ENCODE measurements at regions of chr13 and their contacts with region 1.

Region 1: GRCh38 chr13:99214232-99214631 is 13.6 kb downstream of the UBAC2 start:
- DNase-seq: no peak
- H3K4me3 Mint-ChIP-seq: peak overlapping the region; percentile 67
- H3K27ac Mint-ChIP-seq: peak overlapping the region; percentile 93
- H3K4me1 Mint-ChIP-seq: peaks cover 61% of the 10 kb centered on the region
- H3K27me3 Mint-ChIP-seq: no peaks in the 10 kb centered on the region

Region 2: GRCh38 chr13:99154064-99154463 is 60.2 kb before region 1 on chr13:
- intact Hi-C with region 1: no loop called
- DNase-seq: no peak
- H3K4me3 Mint-ChIP-seq: no peak overlapping the region
- H3K27ac Mint-ChIP-seq: no peak overlapping the region
- H3K4me1 Mint-ChIP-seq: peaks cover 11% of the 10 kb centered on the region
- H3K27me3 Mint-ChIP-seq: peaks cover 5% of the 10 kb centered on the region

Region 3: DNA sequence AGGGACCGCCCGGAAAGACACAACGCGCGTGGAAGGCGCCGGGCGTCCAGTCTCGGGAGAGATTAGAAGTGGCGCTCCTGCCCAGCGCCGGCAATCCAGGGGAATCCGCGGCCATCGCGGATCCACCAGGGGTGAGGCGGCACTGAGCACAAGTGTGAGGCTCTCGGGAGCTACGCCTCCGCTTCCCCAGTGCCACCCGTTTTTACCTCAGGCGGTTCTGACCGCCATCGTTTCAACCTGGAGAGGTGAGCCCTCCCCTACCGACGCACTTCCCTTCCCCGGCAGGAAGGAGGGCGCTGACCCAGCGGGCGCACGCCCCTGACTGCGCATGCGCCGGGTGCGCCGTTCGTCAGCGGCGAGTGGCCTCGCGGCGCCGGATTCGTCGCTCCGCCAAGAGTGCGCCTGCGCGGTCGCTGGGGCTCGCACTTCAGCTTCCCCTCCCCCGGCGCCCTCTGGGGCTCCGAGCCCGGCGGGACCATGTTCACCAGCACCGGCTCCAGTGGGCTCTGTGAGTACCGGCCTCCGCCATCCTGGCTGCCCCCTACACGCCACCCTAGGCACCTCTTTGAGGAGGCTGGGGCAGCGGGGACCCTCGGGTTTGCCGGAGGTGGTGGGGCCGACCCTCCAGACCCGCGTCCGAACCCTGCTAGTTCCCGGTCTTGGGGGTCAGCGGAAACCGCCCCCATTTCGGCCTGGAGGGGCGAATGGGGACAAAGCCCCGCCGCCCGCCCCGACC is 13.6 kb before region 1 on chr13 and contains the start of gene UBAC2:
- intact Hi-C with region 1: loop called (anchors 1 kb)
- DNase-seq: peak; percentile 96
- H3K4me3 Mint-ChIP-seq: peak within 1 kb of the TSS; percentile 97
- H3K27ac Mint-ChIP-seq: peak within 1 kb of the TSS; percentile 93
- H3K4me1 Mint-ChIP-seq: peaks cover 53% of the 10 kb centered on the region
- H3K27me3 Mint-ChIP-seq: no peaks in the 10 kb centered on the region
- total RNA-seq, gene UBAC2: 53.4 and 55.1 TPM in 2 replicates

Region 4: DNA sequence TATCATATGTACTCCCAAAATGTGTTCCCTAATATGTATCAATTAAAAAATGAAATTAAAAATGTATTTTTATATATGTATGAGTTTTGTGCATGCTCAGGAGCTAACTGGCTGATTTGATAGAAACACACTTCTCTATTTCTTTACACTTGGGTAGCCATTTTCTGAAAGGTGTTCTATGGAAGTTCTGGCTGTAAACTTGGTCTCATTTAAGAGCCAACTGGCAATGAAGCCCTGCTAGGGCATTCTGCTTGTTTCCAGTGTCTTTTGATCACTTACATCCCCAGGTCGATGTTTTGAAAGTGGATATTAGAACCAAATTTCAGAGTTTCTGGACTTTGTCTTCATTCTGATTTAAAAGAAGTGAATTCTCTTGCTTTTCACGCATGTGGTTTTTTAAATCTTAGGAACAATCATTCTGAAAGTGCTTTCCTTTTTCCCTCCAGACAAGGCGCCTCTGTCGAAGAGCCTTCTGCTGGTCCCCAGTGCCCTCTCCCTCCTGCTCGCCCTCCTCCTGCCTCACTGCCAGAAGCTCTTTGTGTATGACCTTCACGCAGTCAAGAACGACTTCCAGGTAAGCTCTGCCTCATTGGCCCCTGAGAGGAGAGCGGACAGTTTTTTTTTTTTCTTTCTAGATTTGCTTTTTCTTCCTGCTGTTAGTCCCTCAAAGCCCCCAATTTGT is 23.9 kb after region 1 on chr13:
- intact Hi-C with region 1: loop called (anchors 1 kb)
- DNase-seq: no peak
- H3K4me3 Mint-ChIP-seq: peak overlapping the region; percentile 73
- H3K27ac Mint-ChIP-seq: peak overlapping the region; percentile 82
- H3K4me1 Mint-ChIP-seq: peaks cover 48% of the 10 kb centered on the region
- H3K27me3 Mint-ChIP-seq: no peaks in the 10 kb centered on the region

Region 5: GRCh38 chr13:99258210-99258860 is 44.1 kb after region 1 on chr13 and contains the start of gene GPR18:
- intact Hi-C with region 1: loop called (anchors 1 kb)
- DNase-seq: peak; percentile 31
- H3K4me3 Mint-ChIP-seq: peak within 1 kb of the TSS; percentile 97
- H3K27ac Mint-ChIP-seq: peak within 1 kb of the TSS; percentile 97
- H3K4me1 Mint-ChIP-seq: peaks cover 61% of the 10 kb centered on the region
- H3K27me3 Mint-ChIP-seq: no peaks in the 10 kb centered on the region
- total RNA-seq, gene GPR18: 7.4 and 8.4 TPM in 2 replicates

Region 6: DNA sequence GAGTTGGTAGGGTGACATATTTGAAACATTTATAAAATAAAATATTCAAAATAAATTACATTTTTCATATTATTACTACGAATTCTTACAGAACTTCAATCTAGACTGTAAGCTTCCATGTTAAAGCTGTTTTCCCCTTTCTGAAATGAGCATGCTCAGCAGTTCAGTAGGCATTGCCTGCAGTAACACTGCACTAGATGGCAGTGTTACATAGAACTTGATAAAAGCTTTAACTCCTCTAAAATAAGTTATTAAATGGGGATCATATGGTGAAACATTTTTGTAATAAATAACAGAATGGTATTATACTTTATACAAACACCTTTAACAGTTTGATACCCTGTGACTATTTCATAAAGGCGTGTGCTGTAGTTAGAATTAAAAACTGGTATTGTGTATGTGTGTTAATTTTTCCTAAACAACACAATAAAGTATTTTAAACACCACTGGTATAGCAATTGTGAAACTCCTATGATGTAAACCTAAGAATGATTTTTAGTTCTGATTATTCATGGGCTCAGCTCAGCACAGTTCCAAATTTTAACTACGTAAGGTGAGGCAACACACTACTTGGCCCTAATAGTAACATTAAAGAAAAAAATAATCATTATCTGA is 55.5 kb after region 1 on chr13:
- intact Hi-C with region 1: no loop called
- DNase-seq: no peak
- H3K4me3 Mint-ChIP-seq: no peak overlapping the region
- H3K27ac Mint-ChIP-seq: no peak overlapping the region
- H3K4me1 Mint-ChIP-seq: peaks cover 54% of the 10 kb centered on the region
- H3K27me3 Mint-ChIP-seq: no peaks in the 10 kb centered on the region

Region 7: GRCh38 chr13:99296398-99296797 is 82.2 kb after region 1 on chr13:
- intact Hi-C with region 1: loop called (anchors 2 kb)
- DNase-seq: no peak
- H3K4me3 Mint-ChIP-seq: peak overlapping the region; percentile 73
- H3K27ac Mint-ChIP-seq: peak overlapping the region; percentile 87
- H3K4me1 Mint-ChIP-seq: peaks cover 74% of the 10 kb centered on the region
- H3K27me3 Mint-ChIP-seq: no peaks in the 10 kb centered on the region

Measured in activated T-helper 2 cell treated with anti-CD3 and anti-CD28 coated beads, Interferon-gamma antibody, Interleukin-2, Interleukin-4, amounts not matched to agents 10 μg/mL and 5 μg/mL and 100 μg/mL, durations not matched to agents 14 hours and 24 hours and 36 hours (primary cell).